Mammary epithelial cell (primary cell): ENCODE measurements at regions of chr15 and their contacts with region 1.

Region 1: DNA sequence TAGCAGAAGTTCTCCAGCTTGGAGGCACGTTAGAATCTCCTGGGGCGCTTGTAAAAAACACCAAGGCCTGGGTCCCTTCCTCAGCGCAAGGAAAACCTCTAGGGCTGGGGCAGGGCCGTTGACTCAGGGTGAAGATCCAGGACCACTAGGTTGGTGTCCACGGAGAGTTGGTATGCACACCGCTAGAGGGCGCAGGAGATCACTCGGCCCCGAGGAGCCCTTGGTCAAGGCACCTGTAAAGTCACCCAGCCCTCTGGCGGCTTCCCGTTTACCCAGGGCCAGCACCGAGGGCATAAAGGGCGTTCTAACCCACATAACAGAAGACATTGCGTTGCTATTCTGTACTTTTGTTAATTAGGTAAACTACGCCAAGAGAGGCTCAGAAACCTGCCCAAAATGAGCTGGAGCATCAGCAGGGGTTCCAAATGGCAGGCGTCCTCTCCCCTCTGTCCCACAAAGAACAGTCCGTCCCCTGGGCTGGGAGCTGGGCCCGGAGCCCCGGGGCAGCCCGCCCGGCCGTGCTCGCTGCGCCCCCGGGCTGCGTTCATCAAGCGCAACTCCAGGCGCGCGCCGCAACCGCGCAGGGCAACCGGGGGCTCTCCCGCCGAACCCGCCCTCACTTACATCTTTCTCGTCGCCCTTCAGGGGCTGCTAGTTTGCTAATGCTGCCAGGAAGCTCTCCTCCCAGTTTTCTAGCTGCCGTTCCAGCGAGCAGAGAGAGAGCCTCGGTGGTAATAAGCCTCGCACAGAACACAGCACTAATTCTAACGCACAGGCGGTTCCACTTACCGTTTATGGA is 332.1 kb downstream of the ARRDC4 start:
- DNase-seq: peak; percentile 20
- H3K4me3 ChIP-seq: peak overlapping the region in 1 of 3 experiments; percentile 13
- H3K27ac ChIP-seq: no peak overlapping the region
- H3K4me1 ChIP-seq: peaks cover 5% of the 10 kb centered on the region
- H3K27me3 ChIP-seq: peaks cover 4% of the 10 kb centered on the region
- CTCF ChIP-seq: peak; percentile 72 to 90

Region 2: DNA sequence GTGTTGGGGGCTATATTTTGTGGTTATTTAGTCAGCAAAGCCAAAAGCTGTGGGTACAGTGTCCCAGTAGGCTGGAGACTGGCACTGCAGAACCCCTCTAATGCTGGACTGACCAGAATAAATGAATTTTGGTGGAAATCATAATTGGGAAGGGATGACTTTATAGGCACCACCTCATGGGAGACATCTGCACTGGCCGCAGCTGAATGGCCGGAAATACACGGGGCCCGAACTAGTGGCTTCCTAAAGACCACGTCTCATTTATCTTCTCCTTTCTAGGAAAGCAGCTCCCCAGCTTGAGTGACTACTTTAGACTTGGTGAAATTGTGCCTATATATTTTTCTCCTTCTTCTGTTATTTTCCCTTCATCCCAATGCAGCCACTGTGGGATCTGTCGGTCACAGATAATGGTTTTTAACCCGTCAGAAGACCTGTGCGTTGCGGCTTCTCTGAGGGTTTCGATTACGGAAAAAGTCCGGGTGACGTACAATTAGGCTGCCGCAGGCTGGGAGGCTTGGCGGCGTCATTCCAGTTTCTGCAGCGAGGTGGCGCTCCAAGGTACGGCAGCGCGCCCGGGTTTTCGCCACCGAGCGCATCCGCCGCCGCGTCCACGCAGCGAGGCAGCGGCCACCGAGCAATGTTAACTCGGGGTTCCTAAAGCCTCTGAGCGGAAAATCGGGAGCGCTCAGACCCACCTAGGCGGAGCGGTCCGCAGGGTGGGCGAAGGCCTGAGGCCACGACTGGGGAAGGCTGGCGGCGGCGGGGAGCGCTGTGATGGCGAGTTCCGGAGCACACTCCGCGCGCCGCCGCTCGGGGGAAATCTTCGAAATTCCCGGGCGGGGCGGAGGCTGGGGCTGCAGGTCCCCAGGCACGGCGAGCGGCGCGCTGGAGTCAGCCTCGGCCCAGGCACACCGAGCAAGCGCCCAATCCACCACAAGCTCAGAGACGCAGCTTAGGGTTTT is 1935.9 kb before region 1 on chr15:
- CTCF ChIA-PET with region 1: no interaction called
- dilution Hi-C with region 1: no loop called
- in situ Hi-C with region 1: no loop called
- intact Hi-C with region 1: loop called (anchors 5 kb)
- DNase-seq: peak; percentile 86
- H3K4me3 ChIP-seq: peak overlapping the region; percentile 61 to 78 (median 73)
- H3K27ac ChIP-seq: peak overlapping the region; percentile 66
- H3K4me1 ChIP-seq: peaks cover 23% of the 10 kb centered on the region
- H3K27me3 ChIP-seq: peaks cover 21% of the 10 kb centered on the region
- CTCF ChIP-seq: peak; percentile 66 to 89

Region 3: GRCh38 chr15:97248376-97248775 is 1044.3 kb before region 1 on chr15:
- CTCF ChIA-PET with region 1: no interaction called
- dilution Hi-C with region 1: no loop called
- in situ Hi-C with region 1: no loop called
- intact Hi-C with region 1: loop called (anchors 5 kb)
- DNase-seq: no peak
- H3K4me3 ChIP-seq: no peak overlapping the region
- H3K27ac ChIP-seq: no peak overlapping the region
- H3K4me1 ChIP-seq: no peaks in the 10 kb centered on the region
- H3K27me3 ChIP-seq: no peaks in the 10 kb centered on the region
- CTCF ChIP-seq: no peak

Region 4: DNA sequence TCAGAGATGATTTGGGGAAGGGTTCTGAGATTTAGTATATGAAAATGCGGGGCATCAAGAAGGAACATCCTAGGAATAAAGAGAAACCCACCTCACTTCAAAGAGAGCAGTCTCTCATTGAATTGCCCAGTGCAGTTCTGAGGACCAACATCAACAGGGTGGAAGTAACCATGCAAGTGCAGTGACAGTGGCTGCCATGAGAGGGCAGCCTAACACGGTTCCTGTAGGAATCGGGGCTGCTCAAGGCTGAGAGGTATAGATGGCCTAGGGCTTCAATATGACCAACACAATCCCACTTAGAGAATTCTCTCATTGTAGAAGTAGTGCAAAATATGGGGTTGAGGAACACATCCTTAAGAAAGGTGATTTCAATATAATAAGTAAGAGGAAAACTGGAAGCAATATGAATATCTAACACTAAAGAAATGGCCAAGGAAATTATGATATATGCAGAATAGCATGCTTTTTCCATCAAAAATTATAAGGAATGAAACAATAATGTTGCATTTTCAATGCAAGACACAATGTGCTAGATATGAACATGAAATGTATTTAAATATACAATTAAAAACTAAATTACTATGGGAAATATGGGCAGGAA is 383.2 kb before region 1 on chr15:
- CTCF ChIA-PET with region 1: no interaction called
- dilution Hi-C with region 1: no loop called
- in situ Hi-C with region 1: loop called in 1 of 2 experiments (anchors 10 kb)
- intact Hi-C with region 1: loop called (anchors 1 kb)
- DNase-seq: peak; percentile 45
- H3K4me3 ChIP-seq: no peak overlapping the region
- H3K27ac ChIP-seq: no peak overlapping the region
- H3K4me1 ChIP-seq: peaks cover 1% of the 10 kb centered on the region
- H3K27me3 ChIP-seq: no peaks in the 10 kb centered on the region
- CTCF ChIP-seq: peak; percentile 96 to 99

Region 5: DNA sequence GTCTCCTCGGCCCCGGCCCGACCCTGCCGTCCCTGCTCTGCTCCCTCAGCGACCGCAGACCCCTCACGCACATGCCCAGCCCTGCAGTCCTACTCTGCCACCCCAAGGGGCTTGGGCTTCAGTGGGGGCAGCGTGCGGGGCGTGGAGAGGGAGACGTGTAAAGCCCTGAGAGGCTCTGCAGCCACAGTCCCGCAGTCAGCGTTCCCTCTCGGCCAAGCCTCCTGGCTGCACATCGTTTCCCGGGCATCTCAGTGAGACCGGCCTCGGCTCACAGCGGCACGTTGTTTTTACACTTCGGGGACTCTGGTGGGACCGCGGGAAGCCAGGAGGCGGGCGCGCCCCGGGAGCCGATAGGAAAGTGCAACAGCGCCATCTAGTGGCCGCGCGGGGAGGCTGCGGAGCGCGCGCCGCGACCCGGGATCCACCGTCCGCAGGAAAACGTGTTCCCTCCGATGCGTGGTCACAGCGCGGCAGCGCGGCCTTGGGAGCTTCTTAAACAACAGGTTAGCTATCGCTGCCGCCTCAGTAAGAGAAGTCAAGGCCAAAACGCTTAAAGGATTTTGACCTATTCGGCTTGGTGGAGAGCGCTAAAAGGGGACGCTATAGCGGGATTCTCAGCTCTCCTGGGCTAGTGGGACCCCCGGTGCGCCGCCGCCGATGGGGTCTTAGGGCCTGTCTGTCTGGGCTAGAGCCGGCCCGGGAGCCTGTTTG is 128.9 kb after region 1 on chr15:
- CTCF ChIA-PET with region 1: no interaction called
- dilution Hi-C with region 1: no loop called
- in situ Hi-C with region 1: no loop called
- intact Hi-C with region 1: loop called (anchors 1 kb)
- DNase-seq: peak; percentile 24
- H3K4me3 ChIP-seq: peak overlapping the region in 1 of 3 experiments; percentile 40
- H3K27ac ChIP-seq: no peak overlapping the region
- H3K4me1 ChIP-seq: peaks cover 8% of the 10 kb centered on the region
- H3K27me3 ChIP-seq: peaks cover 4% of the 10 kb centered on the region
- CTCF ChIP-seq: peak; percentile 69 to 98

Region 6: GRCh38 chr15:98668566-98669308 is 376.1 kb after region 1 on chr15:
- CTCF ChIA-PET with region 1: no interaction called
- dilution Hi-C with region 1: no loop called
- in situ Hi-C with region 1: no loop called
- intact Hi-C with region 1: no loop called
- DNase-seq: peak; percentile 93
- H3K4me3 ChIP-seq: no peak overlapping the region
- H3K27ac ChIP-seq: peak overlapping the region; percentile 95
- H3K4me1 ChIP-seq: peaks cover 57% of the 10 kb centered on the region
- H3K27me3 ChIP-seq: no peaks in the 10 kb centered on the region
- CTCF ChIP-seq: no peak